ENCODE measurements at regions of chr4 and their contacts with region 1.

Region 1: GRCh38 chr4:98626350-98626749 is 32.1 kb downstream of the TSPAN5 start:
- DNase-seq: peak; percentile 89
- ATAC-seq: peak; percentile 91
- H3K4me3 ChIP-seq: peak overlapping the region; percentile 54
- H3K27ac ChIP-seq: peak overlapping the region; percentile 96
- H3K4me1 ChIP-seq: peaks cover 57% of the 10 kb centered on the region
- H3K27me3 ChIP-seq: no peaks in the 10 kb centered on the region
- CTCF ChIP-seq: peak; percentile 41

Region 2: GRCh38 chr4:98260579-98261290 is 365.6 kb before region 1 on chr4:
- CTCF ChIA-PET with region 1: no interaction called
- POLR2A ChIA-PET with region 1: no interaction called
- intact Hi-C with region 1: loop called (anchors 5 kb)
- DNase-seq: peak; percentile 90
- ATAC-seq: peak; percentile 87
- H3K4me3 ChIP-seq: peak overlapping the region; percentile 93
- H3K27ac ChIP-seq: peak overlapping the region; percentile 85
- H3K4me1 ChIP-seq: peaks cover 22% of the 10 kb centered on the region
- H3K27me3 ChIP-seq: no peaks in the 10 kb centered on the region
- CTCF ChIP-seq: no peak

Region 3: GRCh38 chr4:98421111-98421510 is 205.2 kb before region 1 on chr4:
- CTCF ChIA-PET with region 1: no interaction called
- POLR2A ChIA-PET with region 1: no interaction called
- intact Hi-C with region 1: no loop called
- DNase-seq: no peak
- ATAC-seq: no peak
- H3K4me3 ChIP-seq: no peak overlapping the region
- H3K27ac ChIP-seq: no peak overlapping the region
- H3K4me1 ChIP-seq: no peaks in the 10 kb centered on the region
- H3K27me3 ChIP-seq: no peaks in the 10 kb centered on the region
- CTCF ChIP-seq: no peak

Region 4: GRCh38 chr4:98467627-98468072 is 158.7 kb before region 1 on chr4:
- CTCF ChIA-PET with region 1: no interaction called
- POLR2A ChIA-PET with region 1: no interaction called
- intact Hi-C with region 1: loop called (anchors 2 kb)
- DNase-seq: peak; percentile 90
- ATAC-seq: peak; percentile 86
- H3K4me3 ChIP-seq: peak overlapping the region; percentile 64
- H3K27ac ChIP-seq: peak overlapping the region; percentile 73
- H3K4me1 ChIP-seq: peaks cover 14% of the 10 kb centered on the region
- H3K27me3 ChIP-seq: no peaks in the 10 kb centered on the region
- CTCF ChIP-seq: peak; percentile 82

Region 5: GRCh38 chr4:98482847-98483806 is 143.2 kb before region 1 on chr4:
- CTCF ChIA-PET with region 1: no interaction called
- POLR2A ChIA-PET with region 1: no interaction called
- intact Hi-C with region 1: loop called (anchors 5 kb)
- DNase-seq: peak; percentile 82
- ATAC-seq: peak; percentile 68
- H3K4me3 ChIP-seq: peak overlapping the region; percentile 58
- H3K27ac ChIP-seq: peak overlapping the region; percentile 97
- H3K4me1 ChIP-seq: peaks cover 61% of the 10 kb centered on the region
- H3K27me3 ChIP-seq: no peaks in the 10 kb centered on the region
- CTCF ChIP-seq: no peak

Region 6: DNA sequence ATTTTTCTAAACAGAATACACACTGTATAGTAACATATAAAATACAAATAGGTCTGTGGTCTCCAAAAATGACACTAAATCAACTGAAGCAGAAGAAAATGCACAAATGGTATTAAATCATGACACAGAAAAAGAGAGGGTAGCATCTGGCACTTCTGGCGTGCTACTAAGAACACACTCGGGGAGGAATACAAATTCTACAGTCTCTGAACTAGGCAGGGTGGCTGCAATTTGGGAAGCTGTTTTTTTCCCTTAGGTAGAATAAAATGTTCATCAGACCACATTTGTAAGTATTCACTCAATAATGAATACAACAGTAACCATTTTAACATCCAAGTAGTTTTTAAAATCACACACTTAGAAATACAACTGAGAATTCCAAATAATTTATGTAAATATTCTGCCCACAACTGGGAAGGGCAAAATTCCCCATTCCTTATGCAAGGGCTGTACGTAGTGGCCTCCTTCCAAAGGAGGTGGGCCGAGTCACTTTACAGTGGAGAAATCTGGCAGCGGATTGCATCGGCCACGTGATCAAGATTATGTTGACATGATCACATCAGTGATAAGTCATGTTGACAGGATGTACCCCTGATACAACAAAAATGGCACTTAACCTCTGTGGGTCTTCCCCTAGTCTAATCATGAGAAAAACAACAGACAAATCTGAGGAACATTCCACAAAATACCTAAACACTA is 69.0 kb before region 1 on chr4:
- CTCF ChIA-PET with region 1: no interaction called
- POLR2A ChIA-PET with region 1: no interaction called
- intact Hi-C with region 1: loop called (anchors 1 kb)
- DNase-seq: peak; percentile 60
- ATAC-seq: peak; percentile 33
- H3K4me3 ChIP-seq: no peak overlapping the region
- H3K27ac ChIP-seq: peak overlapping the region; percentile 78
- H3K4me1 ChIP-seq: peaks cover 26% of the 10 kb centered on the region
- H3K27me3 ChIP-seq: no peaks in the 10 kb centered on the region
- CTCF ChIP-seq: no peak

Region 7: GRCh38 chr4:98573791-98574190 is 52.6 kb before region 1 on chr4:
- CTCF ChIA-PET with region 1: no interaction called
- POLR2A ChIA-PET with region 1: no interaction called
- intact Hi-C with region 1: loop called (anchors 5 kb)
- DNase-seq: peak; percentile 93
- ATAC-seq: peak; percentile 37
- H3K4me3 ChIP-seq: no peak overlapping the region
- H3K27ac ChIP-seq: peak overlapping the region; percentile 100
- H3K4me1 ChIP-seq: peaks cover 53% of the 10 kb centered on the region
- H3K27me3 ChIP-seq: no peaks in the 10 kb centered on the region
- CTCF ChIP-seq: no peak

Region 8: GRCh38 chr4:98745366-98745765 is 119.0 kb after region 1 on chr4:
- CTCF ChIA-PET with region 1: no interaction called
- POLR2A ChIA-PET with region 1: no interaction called
- intact Hi-C with region 1: no loop called
- DNase-seq: peak; percentile 28
- ATAC-seq: no peak
- H3K4me3 ChIP-seq: no peak overlapping the region
- H3K27ac ChIP-seq: no peak overlapping the region
- H3K4me1 ChIP-seq: no peaks in the 10 kb centered on the region
- H3K27me3 ChIP-seq: no peaks in the 10 kb centered on the region
- CTCF ChIP-seq: peak; percentile 48

Measured in PC-3 (cell line).